ENCODE measurements at regions of chr2 and their contacts with region 1.

Region 1: GRCh38 chr2:156229724-156230362 is 102.7 kb downstream of the NR4A2 start:
- DNase-seq: peak; percentile 38
- H3K4me3 ChIP-seq: no peak overlapping the region
- H3K27ac ChIP-seq: no peak overlapping the region
- H3K4me1 ChIP-seq: no peaks in the 10 kb centered on the region
- H3K27me3 ChIP-seq: no peaks in the 10 kb centered on the region
- CTCF ChIP-seq: no peak

Region 2: GRCh38 chr2:155755481-155755880 is 474.4 kb before region 1 on chr2:
- CTCF ChIA-PET with region 1: no interaction called
- dilution Hi-C with region 1: no loop called
- in situ Hi-C with region 1: no loop called
- intact Hi-C with region 1: no loop called
- DNase-seq: no peak
- H3K4me3 ChIP-seq: no peak overlapping the region
- H3K27ac ChIP-seq: no peak overlapping the region
- H3K4me1 ChIP-seq: no peaks in the 10 kb centered on the region
- H3K27me3 ChIP-seq: no peaks in the 10 kb centered on the region
- CTCF ChIP-seq: no peak

Region 3: DNA sequence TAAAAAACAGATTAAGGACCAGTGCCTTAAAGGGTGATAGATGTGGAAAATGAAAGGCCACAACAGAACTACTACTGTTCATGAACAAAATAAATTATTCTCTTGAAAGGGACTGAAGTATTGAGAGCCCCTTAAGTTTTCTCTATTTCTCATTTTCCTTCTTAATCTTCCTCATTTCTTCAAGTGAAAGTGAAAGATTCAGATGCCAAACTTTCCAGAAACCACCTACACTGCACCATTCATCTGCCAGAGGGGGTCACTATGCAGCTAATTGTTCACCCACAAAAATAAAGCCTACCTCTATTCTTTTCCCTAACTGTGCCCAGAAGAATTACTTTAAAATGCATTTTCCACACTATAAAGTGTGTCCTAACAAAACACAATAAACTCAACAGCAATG is 37.4 kb before region 1 on chr2:
- CTCF ChIA-PET with region 1: no interaction called
- dilution Hi-C with region 1: loop called (anchors 5 kb)
- in situ Hi-C with region 1: no loop called
- intact Hi-C with region 1: no loop called
- DNase-seq: no peak
- H3K4me3 ChIP-seq: no peak overlapping the region
- H3K27ac ChIP-seq: no peak overlapping the region
- H3K4me1 ChIP-seq: no peaks in the 10 kb centered on the region
- H3K27me3 ChIP-seq: no peaks in the 10 kb centered on the region
- CTCF ChIP-seq: peak in 1 of 2 donors; percentile 39

Measured in mammary epithelial cell (primary cell).